Activated CD4-positive, alpha-beta T cell treated with anti-CD3 and anti-CD28 coated beads for 36 hours (primary cell): ENCODE measurements at regions of chr15 and their contacts with region 1.

Region 1: GRCh38 chr15:70097337-70098169 is at the start of gene TLE3:
- DNase-seq: peak; percentile 99
- ATAC-seq: peak; percentile 68
- H3K4me3 Mint-ChIP-seq: peak within 1 kb of the TSS; percentile 93
- H3K27ac Mint-ChIP-seq: peak within 1 kb of the TSS; percentile 95
- H3K4me1 Mint-ChIP-seq: peaks cover 41% of the 10 kb centered on the region
- H3K27me3 Mint-ChIP-seq: peaks cover 5% of the 10 kb centered on the region
- total RNA-seq, gene TLE3: 89.2 to 97.6 TPM

Region 2: GRCh38 chr15:69413822-69414700 is 683.5 kb before region 1 on chr15 and contains the start of gene KIF23:
- CTCF ChIA-PET with region 1: no interaction called
- POLR2A ChIA-PET with region 1: no interaction called
- intact Hi-C with region 1: loop called in 1 of 2 experiments (anchors 1 kb)
- DNase-seq: peak; percentile 96
- ATAC-seq: peak; percentile 95
- H3K4me3 Mint-ChIP-seq: peak within 1 kb of the TSS; percentile 85
- H3K27ac Mint-ChIP-seq: peak within 1 kb of the TSS; percentile 69
- H3K4me1 Mint-ChIP-seq: peaks cover 13% of the 10 kb centered on the region
- H3K27me3 Mint-ChIP-seq: peaks cover 5% of the 10 kb centered on the region
- total RNA-seq, gene KIF23: 47.2 to 48.0 TPM

Region 3: GRCh38 chr15:69576035-69576526 is 521.5 kb before region 1 on chr15:
- CTCF ChIA-PET with region 1: no interaction called
- POLR2A ChIA-PET with region 1: no interaction called
- intact Hi-C with region 1: loop called (anchors 1 to 10 kb)
- DNase-seq: peak; percentile 85
- ATAC-seq: peak; percentile 59
- H3K4me3 Mint-ChIP-seq: no peak overlapping the region
- H3K27ac Mint-ChIP-seq: peak overlapping the region; percentile 16
- H3K4me1 Mint-ChIP-seq: peaks cover 37% of the 10 kb centered on the region
- H3K27me3 Mint-ChIP-seq: no peaks in the 10 kb centered on the region

Region 4: DNA sequence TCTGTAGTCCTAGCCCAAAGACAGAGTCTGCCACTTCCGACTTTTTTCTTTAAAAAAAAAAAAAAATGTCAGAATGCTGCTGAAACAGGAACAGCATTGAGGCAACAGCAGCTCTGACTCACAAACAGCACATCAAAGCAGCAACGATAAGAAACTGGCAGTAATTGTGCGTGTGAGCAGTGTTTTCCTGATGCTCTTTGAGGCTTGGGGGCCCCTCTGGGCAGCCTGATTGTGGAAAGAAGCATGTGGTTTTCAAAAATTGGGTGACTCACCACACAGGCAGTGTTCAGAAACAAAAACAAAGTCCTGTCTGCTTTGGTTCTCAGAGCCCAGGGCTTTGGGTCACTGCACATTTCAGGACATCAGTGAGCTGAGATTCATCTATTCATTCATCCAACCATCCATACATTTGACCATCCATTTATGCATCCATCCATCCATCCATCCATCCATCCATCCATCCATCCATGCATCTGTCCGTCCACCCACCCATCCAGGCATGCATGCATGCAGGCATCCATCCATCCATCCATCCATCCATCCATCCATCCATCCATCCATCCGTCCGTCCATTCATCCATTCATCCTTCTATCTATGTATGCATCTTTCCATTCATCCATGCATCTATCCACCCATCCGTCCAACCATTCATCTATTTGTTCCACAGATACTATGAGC is 336.5 kb before region 1 on chr15:
- CTCF ChIA-PET with region 1: interaction called, 8 read pairs
- POLR2A ChIA-PET with region 1: interaction called, 13 read pairs
- intact Hi-C with region 1: loop called (anchors 1 to 2 kb)
- DNase-seq: peak; percentile 89
- ATAC-seq: peak; percentile 42
- H3K4me3 Mint-ChIP-seq: peak overlapping the region; percentile 25
- H3K27ac Mint-ChIP-seq: peak overlapping the region; percentile 94
- H3K4me1 Mint-ChIP-seq: peaks cover 72% of the 10 kb centered on the region
- H3K27me3 Mint-ChIP-seq: no peaks in the 10 kb centered on the region

Region 5: DNA sequence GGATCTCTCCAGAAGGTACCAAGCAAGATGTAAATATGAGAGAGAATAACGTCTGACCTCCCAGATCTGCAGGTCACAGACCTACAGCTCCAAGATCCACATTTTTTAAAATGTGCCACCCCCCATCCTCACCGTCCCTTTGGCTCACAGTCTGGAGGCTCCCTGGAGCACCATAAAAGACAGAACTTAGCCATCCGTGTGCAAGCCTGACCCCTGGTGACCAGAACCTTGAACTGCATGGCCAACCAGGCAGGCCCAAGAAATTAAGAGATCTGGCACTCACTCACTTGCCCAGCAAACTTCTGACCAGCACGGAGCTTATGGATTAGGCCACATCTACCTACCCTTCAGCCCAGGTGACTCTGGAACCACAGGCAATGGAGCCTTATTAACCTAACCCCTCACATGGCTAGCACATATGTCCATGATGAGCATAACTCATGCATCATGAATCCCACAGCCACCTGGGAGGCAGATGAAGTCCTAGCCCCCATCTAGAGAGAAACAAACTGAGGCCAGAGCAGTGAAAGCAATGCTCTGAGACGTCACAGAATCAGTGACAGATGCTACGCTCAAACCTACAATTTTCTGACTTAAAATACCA is 390.6 kb after region 1 on chr15:
- CTCF ChIA-PET with region 1: no interaction called
- POLR2A ChIA-PET with region 1: interaction called, 7 read pairs
- intact Hi-C with region 1: loop called (anchors 1 to 2 kb)
- DNase-seq: peak; percentile 84
- ATAC-seq: no peak
- H3K4me3 Mint-ChIP-seq: no peak overlapping the region
- H3K27ac Mint-ChIP-seq: no peak overlapping the region
- H3K4me1 Mint-ChIP-seq: peaks cover 57% of the 10 kb centered on the region
- H3K27me3 Mint-ChIP-seq: peaks cover 31% of the 10 kb centered on the region